ENCODE measurements at regions of chr2 and their contacts with region 1.

Region 1: GRCh38 chr2:219402665-219403515 is 15.2 kb upstream of the DNPEP start:
- DNase-seq: peak; percentile 76
- H3K4me3 Mint-ChIP-seq: no peak overlapping the region
- H3K27ac Mint-ChIP-seq: no peak overlapping the region
- H3K4me1 Mint-ChIP-seq: no peaks in the 10 kb centered on the region
- H3K27me3 Mint-ChIP-seq: no peaks in the 10 kb centered on the region

Region 2: DNA sequence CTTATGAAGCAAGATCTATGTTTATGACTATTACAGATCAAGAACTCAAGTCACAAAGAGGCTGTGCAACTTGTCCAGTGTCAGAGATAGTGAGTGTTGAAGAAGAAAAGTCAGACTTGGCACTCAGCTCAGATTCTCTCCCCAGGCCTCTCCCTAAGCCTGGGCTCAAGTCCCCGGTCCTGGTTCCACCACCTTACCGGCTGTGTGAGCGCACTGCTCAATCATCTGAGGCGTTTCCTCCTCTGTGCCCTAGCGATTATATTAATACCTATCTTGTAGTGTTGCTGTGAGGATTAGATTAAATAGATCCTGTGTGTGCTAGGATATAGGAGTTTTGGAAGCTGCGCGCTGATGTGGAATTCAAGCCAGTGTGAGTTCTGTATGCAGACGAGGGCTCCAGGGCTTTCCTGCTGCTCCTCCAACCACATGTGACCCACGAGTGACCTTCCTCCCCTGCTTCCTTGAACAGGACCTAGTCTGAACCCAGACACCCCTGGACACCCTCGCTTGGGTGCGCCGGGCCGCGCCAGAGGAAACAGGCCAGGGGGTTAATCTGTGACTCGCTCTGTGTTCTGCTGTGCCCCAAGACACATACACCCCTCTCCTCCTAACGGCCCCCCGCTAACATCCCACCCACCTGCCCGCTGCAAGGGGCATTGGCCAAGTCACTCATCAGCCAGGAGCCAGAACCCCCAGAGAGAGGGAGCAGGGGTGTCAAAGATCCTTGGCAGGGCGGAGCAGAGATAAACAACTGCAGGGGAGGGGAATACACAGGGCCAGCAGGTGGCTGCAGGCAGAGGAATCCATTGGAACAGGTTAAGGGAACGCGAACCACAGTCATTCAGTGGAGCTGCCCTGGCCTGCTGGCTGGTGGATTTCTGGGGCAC is 1438.4 kb before region 1 on chr2:
- CTCF ChIA-PET with region 1: no interaction called
- intact Hi-C with region 1: no loop called
- DNase-seq: no peak
- H3K4me3 Mint-ChIP-seq: no peak overlapping the region
- H3K27ac Mint-ChIP-seq: no peak overlapping the region
- H3K4me1 Mint-ChIP-seq: no peaks in the 10 kb centered on the region
- H3K27me3 Mint-ChIP-seq: no peaks in the 10 kb centered on the region

Region 3: GRCh38 chr2:219335373-219335786 is 67.5 kb before region 1 on chr2:
- CTCF ChIA-PET with region 1: no interaction called
- intact Hi-C with region 1: no loop called
- DNase-seq: no peak
- H3K4me3 Mint-ChIP-seq: no peak overlapping the region
- H3K27ac Mint-ChIP-seq: no peak overlapping the region
- H3K4me1 Mint-ChIP-seq: no peaks in the 10 kb centered on the region
- H3K27me3 Mint-ChIP-seq: peaks cover 40% of the 10 kb centered on the region

Region 4: DNA sequence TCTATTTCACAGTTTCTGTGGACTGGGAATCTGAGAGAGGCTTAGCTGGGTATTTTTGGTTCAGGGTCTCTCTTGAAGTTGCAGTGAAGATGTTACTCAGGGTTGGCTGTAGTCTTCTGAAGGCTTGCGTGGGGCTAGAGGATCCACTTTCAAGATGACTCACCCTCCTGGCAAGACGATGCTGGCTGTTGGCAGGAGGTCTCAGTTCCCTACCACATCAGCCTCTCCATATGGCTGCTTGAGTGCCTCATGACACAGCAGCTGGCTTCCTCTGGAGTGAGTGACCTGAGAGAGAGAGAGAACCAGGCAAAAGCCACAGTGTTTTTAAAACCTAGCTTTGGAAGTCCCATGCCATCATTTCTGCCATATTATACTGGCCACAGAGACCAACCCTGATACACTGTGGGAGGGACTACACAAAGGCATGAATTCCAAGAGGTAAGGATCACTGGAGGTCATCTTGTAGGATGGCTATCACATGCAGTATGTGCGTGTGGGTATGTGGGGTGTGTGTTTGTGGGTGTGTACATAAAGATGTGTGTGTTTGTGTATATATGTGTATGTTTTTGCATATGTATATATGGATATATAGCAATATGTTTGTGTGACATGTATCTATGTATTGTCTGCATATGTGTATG is 40.2 kb before region 1 on chr2:
- CTCF ChIA-PET with region 1: no interaction called
- intact Hi-C with region 1: no loop called
- DNase-seq: no peak
- H3K4me3 Mint-ChIP-seq: no peak overlapping the region
- H3K27ac Mint-ChIP-seq: no peak overlapping the region
- H3K4me1 Mint-ChIP-seq: peaks cover 3% of the 10 kb centered on the region
- H3K27me3 Mint-ChIP-seq: peaks cover 13% of the 10 kb centered on the region

Region 5: GRCh38 chr2:219433666-219434467 is 31.0 kb after region 1 on chr2:
- CTCF ChIA-PET with region 1: interaction called, 7 read pairs
- intact Hi-C with region 1: loop called (anchors 1 kb)
- DNase-seq: peak; percentile 61
- H3K4me3 Mint-ChIP-seq: no peak overlapping the region
- H3K27ac Mint-ChIP-seq: no peak overlapping the region
- H3K4me1 Mint-ChIP-seq: peaks cover 4% of the 10 kb centered on the region
- H3K27me3 Mint-ChIP-seq: peaks cover 19% of the 10 kb centered on the region

Region 6: GRCh38 chr2:219459460-219460311 is 56.8 kb after region 1 on chr2:
- CTCF ChIA-PET with region 1: interaction called, 11 read pairs
- intact Hi-C with region 1: loop called (anchors 1 kb)
- DNase-seq: peak; percentile 55
- H3K4me3 Mint-ChIP-seq: no peak overlapping the region
- H3K27ac Mint-ChIP-seq: no peak overlapping the region
- H3K4me1 Mint-ChIP-seq: no peaks in the 10 kb centered on the region
- H3K27me3 Mint-ChIP-seq: no peaks in the 10 kb centered on the region

Region 7: DNA sequence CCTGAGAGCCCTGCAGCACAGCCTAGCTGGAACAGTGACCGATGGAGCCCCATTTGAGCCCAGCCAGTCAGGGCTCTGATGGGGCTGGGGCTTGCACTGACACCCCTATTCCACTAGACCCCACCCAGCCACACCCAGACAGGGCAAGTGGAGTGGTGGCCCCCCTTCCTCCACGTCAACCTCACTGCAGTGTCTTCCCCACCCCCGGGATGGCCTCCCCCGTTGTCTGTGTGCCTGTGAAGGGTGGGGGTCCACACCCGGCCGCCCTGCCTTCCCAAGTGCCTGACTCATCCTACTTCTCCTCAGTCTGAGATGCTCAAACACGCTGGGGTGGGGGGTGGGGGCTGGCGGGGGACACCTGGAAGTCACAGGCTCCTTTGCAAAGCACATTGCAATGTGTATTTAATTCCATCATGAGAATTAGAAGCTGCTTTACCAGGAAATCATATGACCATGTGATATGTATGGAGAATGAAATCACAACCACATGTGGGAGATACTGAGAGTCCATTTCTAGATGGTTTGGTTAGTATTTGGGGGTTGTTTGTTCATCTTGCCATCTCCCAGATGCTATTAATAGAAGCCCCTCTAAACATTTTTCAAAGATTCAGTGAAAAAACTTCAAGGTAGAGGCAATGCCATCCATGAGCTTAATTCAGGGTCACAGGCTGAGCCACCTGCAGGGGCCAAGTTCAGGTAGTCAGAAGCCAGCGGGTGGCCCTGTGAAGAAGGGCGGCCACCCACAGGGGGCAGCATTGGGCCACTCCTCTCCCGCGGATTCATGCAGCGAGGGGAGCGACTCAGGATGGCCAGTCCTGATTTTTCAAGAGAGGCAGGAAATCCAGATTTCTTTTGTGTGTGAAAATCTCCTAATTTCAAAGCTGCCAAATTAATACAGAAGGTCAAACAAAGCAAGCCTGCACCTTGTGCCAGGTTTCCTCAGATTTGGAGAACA is 73.1 kb after region 1 on chr2:
- CTCF ChIA-PET with region 1: interaction called, 5 read pairs
- intact Hi-C with region 1: loop called (anchors 1 kb)
- DNase-seq: peak; percentile 80
- H3K4me3 Mint-ChIP-seq: no peak overlapping the region
- H3K27ac Mint-ChIP-seq: no peak overlapping the region
- H3K4me1 Mint-ChIP-seq: peaks cover 4% of the 10 kb centered on the region
- H3K27me3 Mint-ChIP-seq: peaks cover 2% of the 10 kb centered on the region

Region 8: DNA sequence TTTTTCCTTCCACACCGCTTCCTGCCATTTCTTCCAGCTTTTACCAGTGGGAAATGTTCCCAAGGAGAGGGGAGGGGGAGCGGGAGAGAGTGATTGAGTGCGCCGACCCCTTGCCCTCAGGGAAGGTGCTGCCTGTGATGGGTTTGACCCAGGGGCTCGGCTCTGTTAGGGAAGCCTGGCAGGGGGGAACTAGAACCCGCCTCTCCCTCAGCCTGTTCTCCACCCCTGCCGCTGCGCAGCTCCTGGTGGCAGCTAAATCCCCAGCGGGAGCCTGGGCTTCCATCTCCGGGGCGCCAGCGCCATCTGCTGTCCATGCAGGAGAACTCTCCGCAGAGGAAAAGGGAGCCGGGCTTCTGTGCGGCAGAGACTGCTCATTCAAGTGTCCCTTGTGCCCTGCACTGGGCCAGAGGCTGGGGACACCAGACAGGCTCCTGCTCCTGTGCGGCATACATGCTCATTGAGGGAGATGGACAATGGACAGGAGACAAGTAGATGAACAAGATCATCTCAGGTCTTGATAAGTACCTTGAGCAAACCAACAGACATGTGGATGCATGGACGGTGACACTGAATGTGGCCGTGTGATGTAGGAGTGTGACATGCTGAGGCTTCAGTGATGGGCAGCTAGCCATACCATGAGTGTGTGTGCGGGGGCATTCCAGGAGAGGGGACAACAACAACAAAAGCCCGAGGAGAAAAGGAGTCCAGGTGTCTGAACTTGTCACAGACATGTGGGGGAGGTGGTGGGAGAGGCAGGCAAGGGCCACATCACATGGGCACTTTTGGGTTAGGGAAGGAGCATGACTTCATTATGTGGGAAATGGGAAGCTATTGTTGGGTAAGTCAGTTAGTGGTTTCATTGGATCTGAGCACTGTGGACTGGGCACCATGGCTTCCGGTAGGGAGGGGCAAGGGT is 127.4 kb after region 1 on chr2:
- CTCF ChIA-PET with region 1: interaction called, 78 read pairs
- intact Hi-C with region 1: loop called (anchors 1 kb)
- DNase-seq: peak; percentile 90
- H3K4me3 Mint-ChIP-seq: no peak overlapping the region
- H3K27ac Mint-ChIP-seq: no peak overlapping the region
- H3K4me1 Mint-ChIP-seq: no peaks in the 10 kb centered on the region
- H3K27me3 Mint-ChIP-seq: peaks cover 52% of the 10 kb centered on the region

Region 9: DNA sequence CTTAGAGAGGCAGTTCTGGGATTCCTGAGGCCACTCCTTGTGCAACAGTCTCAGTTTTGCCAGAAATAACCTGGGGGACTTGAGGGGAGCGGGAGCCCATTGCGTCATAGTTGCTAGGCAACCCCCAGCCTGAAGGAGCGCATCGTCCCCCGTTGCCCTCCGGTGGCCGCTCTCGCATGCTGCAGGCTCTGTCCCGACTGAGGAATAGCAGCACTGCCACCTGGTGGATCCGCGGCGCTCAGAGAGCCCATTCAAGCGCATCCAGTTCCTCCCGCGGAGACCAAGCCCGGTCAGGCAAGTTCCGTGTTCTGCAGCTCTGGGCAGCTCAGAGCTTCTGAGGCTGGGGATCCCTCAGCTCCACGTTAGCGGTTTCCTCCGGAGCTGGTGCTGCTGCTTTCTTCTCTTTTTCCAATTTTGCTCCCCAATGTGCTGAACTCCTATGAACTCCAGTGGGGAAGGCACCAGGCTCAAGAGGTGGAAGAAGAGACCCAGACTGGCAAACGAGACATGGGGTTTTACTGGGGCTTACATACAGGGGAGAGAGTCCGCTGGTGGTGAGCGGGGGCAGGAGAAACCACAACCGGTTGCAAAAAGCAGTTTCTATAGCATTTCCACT is 239.7 kb after region 1 on chr2:
- CTCF ChIA-PET with region 1: interaction called, 3 read pairs
- intact Hi-C with region 1: loop called (anchors 1 kb)
- DNase-seq: peak; percentile 95
- H3K4me3 Mint-ChIP-seq: no peak overlapping the region
- H3K27ac Mint-ChIP-seq: no peak overlapping the region
- H3K4me1 Mint-ChIP-seq: peaks cover 5% of the 10 kb centered on the region
- H3K27me3 Mint-ChIP-seq: peaks cover 6% of the 10 kb centered on the region

Region 10: GRCh38 chr2:219689676-219690628 is 287.1 kb after region 1 on chr2:
- CTCF ChIA-PET with region 1: interaction called, 4 read pairs
- intact Hi-C with region 1: loop called (anchors 2 kb)
- DNase-seq: peak; percentile 71
- H3K4me3 Mint-ChIP-seq: no peak overlapping the region
- H3K27ac Mint-ChIP-seq: no peak overlapping the region
- H3K4me1 Mint-ChIP-seq: peaks cover 7% of the 10 kb centered on the region
- H3K27me3 Mint-ChIP-seq: peaks cover 21% of the 10 kb centered on the region